Sciatic nerve (tissue), 2 donors: ENCODE measurements at regions of chr1 and their contacts with region 1.

Region 1: GRCh38 chr1:236058141-236058934 is 6.6 kb downstream of the NID1 start:
- DNase-seq: no peak
- ATAC-seq: peak; percentile 67

Region 2: DNA sequence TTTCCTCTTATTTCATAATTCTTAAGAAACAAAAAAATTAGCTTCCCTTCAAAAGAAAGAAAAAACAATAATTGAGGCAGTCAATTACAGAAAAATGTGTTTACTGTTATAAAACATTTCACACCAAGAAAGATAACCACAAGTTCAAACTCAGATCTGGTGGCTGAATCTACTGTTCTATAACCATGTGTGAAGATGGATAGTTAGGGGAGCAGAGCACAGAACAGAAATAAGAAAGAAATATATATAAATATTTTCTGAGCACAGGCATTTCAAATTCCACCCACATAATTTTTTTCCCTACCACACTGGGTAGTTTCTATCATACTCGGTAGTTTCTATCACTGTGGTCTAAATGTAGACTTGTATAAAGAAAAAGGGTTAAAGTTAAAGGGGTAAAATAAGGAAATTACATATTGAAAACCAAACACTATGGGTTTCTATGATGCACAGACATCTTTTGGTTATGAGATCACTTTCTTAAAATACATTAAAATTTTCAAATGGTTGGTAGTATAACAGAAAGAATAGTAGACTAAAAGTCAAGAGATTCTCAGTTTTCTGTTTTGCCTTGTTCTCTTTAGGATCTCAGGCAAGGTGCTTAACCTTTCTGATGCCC is 202.4 kb before region 1 on chr1:
- intact Hi-C with region 1: loop called (anchors 10 kb)
- DNase-seq: no peak
- ATAC-seq: no peak

Region 3: GRCh38 chr1:235902638-235903542 is 155.4 kb before region 1 on chr1:
- intact Hi-C with region 1: no loop called
- DNase-seq: no peak
- ATAC-seq: peak; percentile 32